Activated naive CD8-positive, alpha-beta T cell treated with anti-CD3 and anti-CD28 coated beads, Interleukin-2, amount 10 ng/mL, durations not matched to agents 7 days and 5 days (primary cell): ENCODE measurements at regions of chr1 and their contacts with region 1.

Region 1: DNA sequence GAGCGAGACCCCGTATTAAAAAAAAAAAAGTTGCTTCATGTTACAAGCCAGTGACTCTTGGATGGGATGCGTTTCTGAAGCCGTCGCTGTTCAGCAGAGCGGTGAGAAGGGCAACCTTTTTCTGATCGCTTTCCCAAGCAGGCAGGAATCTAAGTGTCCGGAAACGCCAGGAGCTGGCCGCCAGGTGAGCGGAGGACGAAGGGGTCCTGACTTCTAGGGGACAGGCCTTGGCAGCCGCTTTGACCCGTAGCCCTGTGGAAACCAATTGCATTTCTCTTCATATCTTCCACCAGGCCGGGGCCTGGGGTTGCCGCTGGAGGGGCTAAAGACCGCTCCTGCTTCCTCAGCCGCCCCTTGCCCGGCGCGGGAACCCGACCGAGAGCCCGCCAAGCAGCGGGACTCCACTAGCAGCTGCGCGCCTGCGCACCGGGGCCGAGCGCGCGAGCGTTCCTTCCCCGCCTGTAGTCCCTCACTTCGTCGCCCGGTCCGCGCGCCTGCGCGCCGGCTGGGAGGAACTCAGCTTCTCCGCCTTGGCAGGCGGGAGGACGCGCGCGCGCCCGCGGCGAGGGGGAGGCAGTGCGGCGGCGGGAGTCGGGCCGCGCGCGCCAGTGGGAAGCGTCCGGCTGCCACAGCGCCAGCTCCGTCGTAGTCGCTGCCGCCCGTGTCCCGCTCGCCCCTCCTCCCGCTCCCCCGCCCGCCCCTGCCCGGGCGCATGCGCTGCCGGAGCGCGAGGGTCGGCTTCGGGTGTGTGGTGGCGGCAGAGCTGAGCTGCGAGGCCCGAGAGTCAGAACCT is at the start of gene SPEN:
- DNase-seq: peak; percentile 99
- ATAC-seq: peak; percentile 87
- H3K4me3 Mint-ChIP-seq: peak within 1 kb of the TSS; percentile 98
- H3K27ac Mint-ChIP-seq: peak within 1 kb of the TSS; percentile 97
- H3K4me1 Mint-ChIP-seq: peaks cover 41% of the 10 kb centered on the region
- H3K27me3 Mint-ChIP-seq: no peaks in the 10 kb centered on the region
- total RNA-seq, gene SPEN: 68.8 to 69.8 TPM

Region 2: GRCh38 chr1:15825800-15826199 is 21.5 kb before region 1 on chr1:
- POLR2A ChIA-PET with region 1: interaction called, 159 read pairs
- DNase-seq: no peak
- ATAC-seq: no peak
- H3K4me3 Mint-ChIP-seq: no peak overlapping the region
- H3K27ac Mint-ChIP-seq: no peak overlapping the region
- H3K4me1 Mint-ChIP-seq: peaks cover 18% of the 10 kb centered on the region
- H3K27me3 Mint-ChIP-seq: no peaks in the 10 kb centered on the region